ENCODE measurements at regions of chr6 and their contacts with region 1.

Region 1: GRCh38 chr6:43769526-43770416 is at the start of gene VEGFA:
- DNase-seq: peak; percentile 81 to 99 (median 92)
- ATAC-seq: peak; percentile 59 to 76 (median 68)
- H3K4me3 ChIP-seq: peak within 1 kb of the TSS; percentile 76 to 96 (median 87)
- H3K27ac ChIP-seq: peak within 1 kb of the TSS; percentile 92 to 100 (median 96)
- H3K4me1 ChIP-seq: peaks cover 8 to 11% (median 8%) of the 10 kb centered on the region in 3 donors
- H3K27me3 ChIP-seq: no peaks in the 10 kb centered on the region
- CTCF ChIP-seq: peak; percentile 87 to 94 (median 92)
- total RNA-seq, gene VEGFA: 55.2 to 127 (median 90.0) TPM

Region 2: DNA sequence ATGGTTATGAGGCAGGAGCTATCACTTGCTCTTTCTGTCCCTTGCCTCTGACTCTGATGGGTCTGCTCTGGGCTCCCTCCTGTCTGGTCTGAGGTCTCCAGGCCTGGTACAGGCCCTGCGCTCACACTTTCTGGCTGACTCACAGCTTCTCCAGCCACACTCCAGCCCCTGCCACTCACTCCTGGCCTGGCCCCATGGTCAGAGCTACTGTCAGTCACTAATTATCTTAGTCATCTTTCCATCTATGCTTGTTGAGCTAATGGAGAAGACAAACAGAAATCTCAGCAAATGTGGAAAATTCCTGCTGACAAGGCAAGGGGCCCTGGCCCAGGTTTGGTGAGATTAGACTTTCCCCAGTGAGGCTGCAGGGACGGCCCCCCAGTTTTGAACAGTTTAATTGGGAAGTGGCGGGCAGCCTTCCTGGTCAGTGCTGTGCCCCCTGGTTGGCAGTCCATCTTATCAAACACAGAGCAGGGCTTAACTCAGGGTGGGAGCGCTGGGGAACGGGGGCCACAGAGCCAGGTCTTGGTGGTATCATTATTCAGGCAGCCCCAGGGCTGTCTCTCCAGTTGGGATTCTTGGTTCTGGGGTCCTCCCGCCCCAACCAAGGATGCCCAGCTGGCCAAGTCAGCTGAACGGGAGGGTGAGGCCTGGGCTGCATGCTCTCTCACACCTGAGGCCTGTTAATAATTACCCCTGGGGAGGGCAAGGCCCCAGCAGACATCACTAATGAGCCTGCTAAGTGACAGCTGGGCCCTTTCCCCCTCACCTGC is 63.6 kb after region 1 on chr6:
- intact Hi-C with region 1: loop called in 2 of 3 experiments (anchors 5 kb)
- DNase-seq: peak in 5 of 6 donors; percentile 67 to 87 (median 78)
- ATAC-seq: peak; percentile 79 to 89 (median 86)
- H3K4me3 ChIP-seq: no peak overlapping the region
- H3K27ac ChIP-seq: peak overlapping the region; percentile 1 to 75 (median 51)
- H3K4me1 ChIP-seq: peaks cover 22 to 38% (median 31%) of the 10 kb centered on the region in 3 donors
- H3K27me3 ChIP-seq: no peaks in the 10 kb centered on the region
- CTCF ChIP-seq: no peak

Region 3: DNA sequence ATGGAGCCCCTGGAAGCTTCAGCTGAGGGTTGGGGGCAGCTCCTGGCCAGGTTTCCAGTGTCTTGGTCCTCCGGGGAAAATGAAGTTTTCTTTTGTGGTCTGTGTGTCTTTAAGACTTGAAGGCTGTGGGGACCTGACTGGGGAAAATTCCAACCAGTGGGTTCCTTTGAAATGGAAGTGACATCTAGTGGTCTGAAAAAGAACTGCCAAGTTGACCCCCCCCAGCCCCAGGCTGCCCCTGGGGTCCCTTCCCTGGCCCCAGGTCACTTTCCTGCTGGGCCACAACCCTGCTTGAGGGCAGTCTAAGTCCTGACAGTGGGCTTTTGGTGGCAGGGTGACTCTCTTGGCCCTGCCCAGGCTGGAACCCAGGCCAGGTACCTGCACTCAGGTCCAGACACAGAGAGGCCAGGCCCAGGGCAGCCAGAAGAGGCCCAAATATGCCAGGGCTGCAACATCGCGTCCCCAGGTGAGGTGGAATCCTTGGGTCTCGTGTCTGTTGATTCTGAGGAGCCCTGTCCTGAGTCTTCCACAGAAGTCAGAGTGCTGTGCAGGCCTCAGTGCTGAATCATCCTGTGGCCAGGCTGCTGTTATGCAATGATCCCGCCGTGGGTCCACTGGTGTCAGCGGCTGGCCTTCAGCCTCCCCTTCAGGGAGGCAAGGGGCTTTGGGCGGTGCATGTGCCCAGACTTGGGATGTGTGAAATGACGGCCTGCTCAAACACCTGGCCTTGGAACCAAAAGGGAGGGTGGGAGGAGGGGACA is 68.7 kb after region 1 on chr6:
- intact Hi-C with region 1: loop called in 2 of 3 experiments (anchors 5 kb)
- DNase-seq: peak in 5 of 6 donors; percentile 43 to 68 (median 57)
- ATAC-seq: peak; percentile 64 to 79 (median 71)
- H3K4me3 ChIP-seq: no peak overlapping the region
- H3K27ac ChIP-seq: peak overlapping the region in 3 of 4 donors; percentile 32 to 50 (median 39)
- H3K4me1 ChIP-seq: peaks cover 13 to 32% (median 30%) of the 10 kb centered on the region in 3 donors
- H3K27me3 ChIP-seq: no peaks in the 10 kb centered on the region
- CTCF ChIP-seq: peak; percentile 27 to 66 (median 54)